MCF 10A (cell line): ENCODE measurements at regions of chr3 and their contacts with region 1.

Region 1: DNA sequence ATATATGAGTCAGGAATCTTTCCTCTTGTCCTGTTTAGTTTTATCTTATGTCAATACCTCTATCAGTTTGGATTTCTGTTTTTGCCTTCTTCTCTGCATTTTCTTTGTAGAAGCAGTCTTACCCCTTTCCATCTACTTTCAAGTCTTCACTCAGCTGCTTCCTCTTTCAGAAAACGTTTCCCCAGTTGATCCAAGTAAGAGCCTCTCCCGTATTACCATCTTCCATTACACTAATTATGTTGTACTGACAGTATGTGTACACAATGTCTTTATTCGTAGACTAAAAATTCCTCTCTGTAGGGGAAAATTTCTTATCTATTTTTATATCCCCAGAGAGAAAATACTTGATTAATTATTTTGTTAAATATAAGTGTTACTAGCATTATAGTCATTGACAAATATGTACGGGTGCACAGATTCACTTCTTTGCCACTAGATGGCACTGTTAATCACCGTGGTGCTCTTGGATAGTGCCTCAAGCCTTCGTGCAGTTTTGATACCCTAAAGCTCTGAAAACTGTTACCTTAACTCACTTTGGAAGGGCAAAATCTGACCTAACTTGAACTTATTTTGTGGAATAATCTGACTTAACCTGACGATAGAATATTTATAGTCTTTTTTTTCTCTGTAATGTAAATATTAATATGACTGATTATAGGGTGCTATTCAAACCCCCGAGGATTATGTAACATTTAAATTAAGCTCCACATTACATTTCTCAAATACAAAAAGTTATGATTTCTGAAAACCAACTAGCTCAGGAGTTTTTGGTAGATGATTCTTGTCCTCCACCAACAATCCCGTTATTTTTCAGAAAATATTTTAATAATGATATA is 74.2 kb upstream of the POU1F1 start:
- DNase-seq: peak; percentile 66
- H3K4me3 Mint-ChIP-seq: no peak overlapping the region
- H3K27ac Mint-ChIP-seq: no peak overlapping the region
- H3K4me1 Mint-ChIP-seq: no peaks in the 10 kb centered on the region
- H3K27me3 Mint-ChIP-seq: no peaks in the 10 kb centered on the region
- CTCF ChIP-seq: peak; percentile 72

Region 2: DNA sequence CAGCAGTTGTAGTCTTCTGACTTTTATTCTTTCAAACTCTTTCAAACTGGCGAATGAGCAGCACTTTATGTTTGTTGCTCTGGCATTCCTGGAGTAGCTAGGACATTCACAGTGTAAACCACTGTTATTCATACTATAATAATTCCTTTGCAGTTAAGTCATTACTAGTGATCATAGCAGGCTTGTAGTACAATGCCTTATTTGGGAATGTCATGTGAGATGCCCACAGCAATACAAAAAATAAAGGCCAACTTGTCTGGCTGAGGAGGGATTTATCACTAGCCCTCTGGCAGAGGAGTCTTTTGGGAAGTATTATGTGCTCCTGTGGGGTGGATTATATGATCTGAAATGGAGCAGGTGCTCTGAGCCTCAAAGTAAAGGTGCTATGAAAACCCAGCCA is 556.8 kb before region 1 on chr3:
- CTCF ChIA-PET with region 1: no interaction called
- POLR2A ChIA-PET with region 1: no interaction called
- intact Hi-C with region 1: no loop called
- DNase-seq: peak; percentile 75
- H3K4me3 Mint-ChIP-seq: peak overlapping the region; percentile 49
- H3K27ac Mint-ChIP-seq: peak overlapping the region; percentile 98
- H3K4me1 Mint-ChIP-seq: peaks cover 22% of the 10 kb centered on the region
- H3K27me3 Mint-ChIP-seq: no peaks in the 10 kb centered on the region
- CTCF ChIP-seq: no peak

Region 3: GRCh38 chr3:87101861-87102625 is 248.5 kb before region 1 on chr3:
- CTCF ChIA-PET with region 1: no interaction called
- POLR2A ChIA-PET with region 1: no interaction called
- intact Hi-C with region 1: no loop called
- DNase-seq: no peak
- H3K4me3 Mint-ChIP-seq: no peak overlapping the region
- H3K27ac Mint-ChIP-seq: no peak overlapping the region
- H3K4me1 Mint-ChIP-seq: no peaks in the 10 kb centered on the region
- H3K27me3 Mint-ChIP-seq: no peaks in the 10 kb centered on the region
- CTCF ChIP-seq: no peak

Region 4: GRCh38 chr3:87298111-87298718 is 52.4 kb before region 1 on chr3:
- CTCF ChIA-PET with region 1: interaction called, 10 read pairs
- POLR2A ChIA-PET with region 1: no interaction called
- intact Hi-C with region 1: loop called (anchors 2 kb)
- DNase-seq: peak; percentile 68
- H3K4me3 Mint-ChIP-seq: no peak overlapping the region
- H3K27ac Mint-ChIP-seq: no peak overlapping the region
- H3K4me1 Mint-ChIP-seq: no peaks in the 10 kb centered on the region
- H3K27me3 Mint-ChIP-seq: no peaks in the 10 kb centered on the region
- CTCF ChIP-seq: peak; percentile 54

Region 5: DNA sequence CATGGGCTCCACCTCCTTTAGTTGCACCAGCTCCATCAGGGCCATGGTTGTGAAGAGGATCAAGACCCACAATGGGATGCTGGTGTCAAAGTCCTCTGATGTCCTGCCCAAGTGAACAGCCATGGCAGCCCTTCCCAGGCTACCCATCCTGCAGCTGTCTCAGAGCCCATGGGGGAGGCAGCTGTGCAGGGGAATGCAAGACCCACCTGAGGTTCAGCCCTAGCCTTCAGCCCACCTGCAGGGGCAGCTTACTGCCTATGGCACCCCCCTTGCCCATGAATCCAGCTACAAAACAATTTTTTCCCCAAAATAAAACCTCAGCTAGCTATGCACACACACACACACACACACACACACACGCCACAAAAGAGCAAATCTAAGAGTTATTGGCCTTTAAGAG is 26.0 kb before region 1 on chr3:
- CTCF ChIA-PET with region 1: interaction called, 18 read pairs
- POLR2A ChIA-PET with region 1: no interaction called
- intact Hi-C with region 1: no loop called
- DNase-seq: no peak
- H3K4me3 Mint-ChIP-seq: no peak overlapping the region
- H3K27ac Mint-ChIP-seq: no peak overlapping the region
- H3K4me1 Mint-ChIP-seq: peaks cover 5% of the 10 kb centered on the region
- H3K27me3 Mint-ChIP-seq: no peaks in the 10 kb centered on the region
- CTCF ChIP-seq: no peak

Region 6: DNA sequence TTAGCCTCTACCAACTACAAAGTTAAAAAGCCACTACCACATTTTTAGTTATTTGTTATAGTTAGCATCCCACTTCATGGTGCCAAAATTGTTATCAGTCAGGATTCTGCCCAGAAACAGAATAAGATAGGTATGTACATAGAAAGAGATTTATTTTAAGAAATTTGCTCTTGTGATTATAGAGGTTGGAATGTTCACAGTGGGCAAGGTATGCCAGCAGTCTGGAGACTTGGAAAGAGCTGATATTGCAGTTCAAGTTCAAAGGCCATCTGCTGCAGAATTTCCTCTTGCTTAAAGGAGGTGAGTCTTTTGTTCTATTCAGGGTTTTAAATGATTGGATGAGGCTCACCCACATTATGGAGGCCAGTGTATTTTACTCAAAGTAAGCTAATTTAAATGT is 69.6 kb after region 1 on chr3:
- CTCF ChIA-PET with region 1: no interaction called
- POLR2A ChIA-PET with region 1: no interaction called
- intact Hi-C with region 1: no loop called
- DNase-seq: no peak
- H3K4me3 Mint-ChIP-seq: no peak overlapping the region
- H3K27ac Mint-ChIP-seq: no peak overlapping the region
- H3K4me1 Mint-ChIP-seq: peaks cover 6% of the 10 kb centered on the region
- H3K27me3 Mint-ChIP-seq: no peaks in the 10 kb centered on the region
- CTCF ChIP-seq: no peak

Region 7: DNA sequence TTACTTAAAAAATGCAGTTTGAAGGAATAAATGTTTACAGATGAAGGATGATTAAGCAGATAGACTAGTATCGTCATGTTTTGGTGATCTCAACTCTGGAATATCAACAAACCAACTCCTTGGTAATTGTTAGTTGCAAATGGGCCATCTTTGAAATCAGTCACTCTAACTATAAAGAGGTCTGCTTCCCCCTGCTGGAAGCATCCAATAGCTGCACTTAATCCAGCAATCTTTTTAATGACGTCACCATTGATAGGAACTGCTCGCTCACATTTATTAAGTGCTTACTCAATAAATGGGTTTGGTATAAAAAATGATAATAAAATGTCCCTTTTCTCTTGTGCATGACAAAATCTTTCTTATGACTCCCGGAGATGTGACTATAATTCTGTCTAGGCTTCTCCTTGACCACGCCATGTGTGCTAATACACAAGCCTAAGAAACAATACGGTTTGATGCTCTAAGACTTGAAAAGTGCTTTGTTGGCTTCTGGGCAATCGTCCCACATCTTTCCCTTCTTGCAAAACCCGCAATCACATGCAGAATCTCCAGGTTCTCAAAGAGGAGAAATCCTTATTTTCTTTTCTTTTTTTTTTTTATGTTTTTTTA is 153.4 kb after region 1 on chr3:
- CTCF ChIA-PET with region 1: interaction called, 104 read pairs
- POLR2A ChIA-PET with region 1: no interaction called
- intact Hi-C with region 1: loop called (anchors 1 kb)
- DNase-seq: peak; percentile 81
- H3K4me3 Mint-ChIP-seq: no peak overlapping the region
- H3K27ac Mint-ChIP-seq: no peak overlapping the region
- H3K4me1 Mint-ChIP-seq: no peaks in the 10 kb centered on the region
- H3K27me3 Mint-ChIP-seq: no peaks in the 10 kb centered on the region
- CTCF ChIP-seq: peak; percentile 70

Region 8: GRCh38 chr3:88113311-88114162 is 763.0 kb after region 1 on chr3:
- CTCF ChIA-PET with region 1: interaction called, 4 read pairs
- POLR2A ChIA-PET with region 1: no interaction called
- intact Hi-C with region 1: loop called (anchors 2 kb)
- DNase-seq: peak; percentile 81
- H3K4me3 Mint-ChIP-seq: no peak overlapping the region
- H3K27ac Mint-ChIP-seq: peak overlapping the region; percentile 23
- H3K4me1 Mint-ChIP-seq: peaks cover 17% of the 10 kb centered on the region
- H3K27me3 Mint-ChIP-seq: no peaks in the 10 kb centered on the region
- CTCF ChIP-seq: peak; percentile 58